ENCODE measurements at regions of chr1 and their contacts with region 1.

Region 1: GRCh38 chr1:11838349-11839272 is 9.0 kb downstream of the NPPA start:
- DNase-seq: peak; percentile 55 to 84 (median 70)
- ATAC-seq: peak; percentile 98
- H3K4me3 ChIP-seq: no peak overlapping the region
- H3K4me3 Mint-ChIP-seq: no peak overlapping the region
- H3K27ac ChIP-seq: no peak overlapping the region
- H3K27ac Mint-ChIP-seq: no peak overlapping the region
- H3K4me1 ChIP-seq: peaks cover 4% of the 10 kb centered on the region
- H3K4me1 Mint-ChIP-seq: peaks cover 5% of the 10 kb centered on the region
- H3K27me3 ChIP-seq: no peaks in the 10 kb centered on the region
- H3K27me3 Mint-ChIP-seq: no peaks in the 10 kb centered on the region
- CTCF ChIP-seq: peak; percentile 99

Region 2: GRCh38 chr1:11576109-11576875 is 262.3 kb before region 1 on chr1:
- CTCF ChIA-PET with region 1: no interaction called
- POLR2A ChIA-PET with region 1: no interaction called
- intact Hi-C with region 1: no loop called
- DNase-seq: no peak
- ATAC-seq: no peak
- H3K4me3 ChIP-seq: no peak overlapping the region
- H3K4me3 Mint-ChIP-seq: no peak overlapping the region
- H3K27ac ChIP-seq: no peak overlapping the region
- H3K27ac Mint-ChIP-seq: no peak overlapping the region
- H3K4me1 ChIP-seq: no peaks in the 10 kb centered on the region
- H3K4me1 Mint-ChIP-seq: no peaks in the 10 kb centered on the region
- H3K27me3 ChIP-seq: peaks cover 0 to 8% of the 10 kb centered on the region in 2 experiments
- H3K27me3 Mint-ChIP-seq: peaks cover 17% of the 10 kb centered on the region
- CTCF ChIP-seq: no peak

Region 3: GRCh38 chr1:11784993-11785769 is 53.4 kb before region 1 on chr1:
- CTCF ChIA-PET with region 1: no interaction called
- POLR2A ChIA-PET with region 1: no interaction called
- intact Hi-C with region 1: no loop called
- DNase-seq: peak in 9 of 14 experiments; percentile 23 to 66 (median 36)
- ATAC-seq: peak; percentile 29
- H3K4me3 ChIP-seq: peak overlapping the region; percentile 36
- H3K4me3 Mint-ChIP-seq: no peak overlapping the region
- H3K27ac ChIP-seq: no peak overlapping the region
- H3K27ac Mint-ChIP-seq: no peak overlapping the region
- H3K4me1 ChIP-seq: peaks cover 13% of the 10 kb centered on the region
- H3K4me1 Mint-ChIP-seq: no peaks in the 10 kb centered on the region
- H3K27me3 ChIP-seq: no peaks in the 10 kb centered on the region
- H3K27me3 Mint-ChIP-seq: no peaks in the 10 kb centered on the region
- CTCF ChIP-seq: peak; percentile 81

Region 4: DNA sequence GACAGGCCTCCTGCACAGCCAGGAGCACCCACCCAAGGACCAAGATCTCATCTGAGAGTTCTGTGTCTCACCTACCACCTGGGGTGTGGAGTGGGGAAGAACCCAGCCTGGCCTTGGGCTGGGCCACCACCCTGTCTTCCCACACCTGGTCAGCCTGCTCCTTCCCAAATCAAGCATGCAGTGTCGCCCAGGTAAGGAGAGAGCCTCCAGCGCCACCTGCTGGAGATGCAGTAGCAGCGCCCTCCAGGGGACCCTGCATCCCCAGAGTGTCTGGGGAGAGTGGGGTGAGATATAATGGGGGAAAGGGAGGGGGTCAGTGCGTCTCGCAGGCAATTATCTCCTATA is 55.3 kb after region 1 on chr1:
- CTCF ChIA-PET with region 1: no interaction called
- POLR2A ChIA-PET with region 1: no interaction called
- intact Hi-C with region 1: loop called (anchors 1 kb)
- DNase-seq: peak; percentile 52 to 81 (median 64)
- ATAC-seq: peak; percentile 91
- H3K4me3 ChIP-seq: no peak overlapping the region
- H3K4me3 Mint-ChIP-seq: no peak overlapping the region
- H3K27ac ChIP-seq: no peak overlapping the region
- H3K27ac Mint-ChIP-seq: no peak overlapping the region
- H3K4me1 ChIP-seq: no peaks in the 10 kb centered on the region
- H3K4me1 Mint-ChIP-seq: no peaks in the 10 kb centered on the region
- H3K27me3 ChIP-seq: peaks cover 19 to 28% of the 10 kb centered on the region in 2 experiments
- H3K27me3 Mint-ChIP-seq: peaks cover 44% of the 10 kb centered on the region
- CTCF ChIP-seq: peak; percentile 83

Region 5: GRCh38 chr1:11967028-11967547 is 128.5 kb after region 1 on chr1:
- CTCF ChIA-PET with region 1: no interaction called
- POLR2A ChIA-PET with region 1: no interaction called
- intact Hi-C with region 1: loop called (anchors 1 to 2 kb)
- DNase-seq: peak in 4 of 14 experiments; percentile 8 to 48 (median 28)
- ATAC-seq: no peak
- H3K4me3 ChIP-seq: no peak overlapping the region
- H3K4me3 Mint-ChIP-seq: no peak overlapping the region
- H3K27ac ChIP-seq: no peak overlapping the region
- H3K27ac Mint-ChIP-seq: no peak overlapping the region
- H3K4me1 ChIP-seq: no peaks in the 10 kb centered on the region
- H3K4me1 Mint-ChIP-seq: no peaks in the 10 kb centered on the region
- H3K27me3 ChIP-seq: no peaks in the 10 kb centered on the region
- H3K27me3 Mint-ChIP-seq: no peaks in the 10 kb centered on the region
- CTCF ChIP-seq: no peak

Region 6: DNA sequence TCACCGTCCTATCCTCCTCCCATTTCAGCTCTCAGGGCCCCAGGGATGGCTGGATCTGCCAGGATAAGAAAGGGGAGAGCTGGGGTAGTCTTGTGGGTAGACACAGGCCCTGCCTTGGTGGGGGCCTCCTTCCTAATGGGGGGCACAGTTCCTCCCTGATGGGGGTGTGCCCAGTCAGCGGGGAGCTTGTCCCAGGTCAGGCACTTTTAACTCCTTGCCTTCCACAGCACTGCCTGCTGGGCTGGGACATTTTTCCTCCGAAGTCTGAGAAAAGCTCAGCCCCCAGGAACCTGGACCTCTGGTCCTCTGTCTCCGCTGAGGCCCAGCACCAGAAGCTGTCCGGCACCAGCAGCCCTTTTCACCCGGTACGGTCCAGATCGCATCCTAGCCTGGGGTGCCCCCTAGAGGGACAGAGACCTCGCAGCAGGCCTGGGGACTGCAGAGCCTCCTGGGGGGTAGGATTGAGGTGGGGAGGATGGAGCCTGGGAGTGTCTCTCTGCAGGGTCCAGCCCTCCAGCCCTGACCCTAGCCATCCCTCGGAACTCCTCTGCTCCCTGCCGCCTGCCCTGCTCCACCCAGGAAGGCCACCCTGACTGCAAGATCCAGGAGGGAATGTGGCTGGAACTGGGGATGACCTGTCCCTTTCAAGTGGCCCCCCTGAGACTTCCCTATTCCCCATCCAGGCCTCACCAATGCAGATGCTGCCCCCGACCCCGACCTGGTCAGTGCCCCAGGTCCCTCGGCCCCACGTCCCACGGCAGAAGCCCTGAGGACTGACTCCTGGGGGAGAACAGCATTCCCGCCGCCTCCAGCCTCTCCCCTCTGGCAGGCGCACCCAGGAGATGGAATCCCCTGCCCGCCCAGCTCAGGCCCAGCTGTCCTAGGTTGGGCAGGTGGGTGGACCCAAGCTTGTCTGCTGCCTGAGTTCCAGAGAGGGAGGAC is 192.7 kb after region 1 on chr1:
- CTCF ChIA-PET with region 1: no interaction called
- POLR2A ChIA-PET with region 1: no interaction called
- intact Hi-C with region 1: loop called in 1 of 2 experiments (anchors 1 kb)
- DNase-seq: peak in 8 of 14 experiments; percentile 7 to 47 (median 32)
- ATAC-seq: no peak
- H3K4me3 ChIP-seq: no peak overlapping the region
- H3K4me3 Mint-ChIP-seq: no peak overlapping the region
- H3K27ac ChIP-seq: no peak overlapping the region
- H3K27ac Mint-ChIP-seq: no peak overlapping the region
- H3K4me1 ChIP-seq: no peaks in the 10 kb centered on the region
- H3K4me1 Mint-ChIP-seq: no peaks in the 10 kb centered on the region
- H3K27me3 ChIP-seq: no peaks in the 10 kb centered on the region
- H3K27me3 Mint-ChIP-seq: no peaks in the 10 kb centered on the region
- CTCF ChIP-seq: peak; percentile 41

Region 7: DNA sequence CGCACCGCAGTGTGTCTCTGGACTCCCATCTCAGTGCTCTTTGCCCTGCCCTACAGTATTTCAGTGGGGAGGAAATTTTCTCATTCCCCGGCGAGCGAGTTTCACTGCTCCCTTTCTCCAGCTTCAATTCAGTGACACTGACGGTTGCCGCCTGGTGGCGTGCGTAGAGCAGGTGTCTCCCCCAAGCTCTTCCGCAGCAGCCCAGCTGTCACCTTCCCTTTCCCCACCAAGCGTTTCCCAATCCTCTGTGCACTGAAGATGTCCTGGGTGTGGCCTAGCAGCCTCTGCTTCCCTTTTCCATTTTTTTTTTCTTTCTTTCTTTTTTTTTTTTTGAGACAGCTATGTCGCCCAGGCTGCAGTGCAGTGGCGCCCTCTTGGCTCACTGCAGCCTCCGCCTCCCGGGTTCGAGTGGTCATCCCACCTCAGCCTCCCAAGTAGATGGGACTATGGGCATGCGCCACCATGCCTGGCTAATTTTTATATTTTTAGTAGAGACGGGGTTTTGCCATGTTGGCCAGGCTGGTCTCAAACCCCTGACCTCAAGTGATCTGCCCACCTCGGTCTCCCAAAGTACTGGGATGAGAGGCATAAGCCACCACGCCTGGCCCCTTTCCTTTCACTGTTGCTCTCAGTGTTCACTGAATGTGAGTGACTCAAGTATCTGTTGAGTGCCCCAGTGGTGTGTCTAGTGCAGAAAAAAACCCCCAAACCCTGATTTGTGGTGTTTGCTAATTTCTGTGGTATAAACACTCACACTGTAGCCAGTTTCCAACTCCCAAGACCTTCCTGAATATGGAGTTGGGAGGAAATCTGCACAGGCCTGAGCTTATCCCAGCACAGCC is 358.3 kb after region 1 on chr1:
- CTCF ChIA-PET with region 1: no interaction called
- POLR2A ChIA-PET with region 1: no interaction called
- intact Hi-C with region 1: no loop called
- DNase-seq: peak in 2 of 14 experiments; percentile 63 to 69
- ATAC-seq: no peak
- H3K4me3 ChIP-seq: no peak overlapping the region
- H3K4me3 Mint-ChIP-seq: no peak overlapping the region
- H3K27ac ChIP-seq: no peak overlapping the region
- H3K27ac Mint-ChIP-seq: no peak overlapping the region
- H3K4me1 ChIP-seq: peaks cover 44% of the 10 kb centered on the region
- H3K4me1 Mint-ChIP-seq: no peaks in the 10 kb centered on the region
- H3K27me3 ChIP-seq: no peaks in the 10 kb centered on the region
- H3K27me3 Mint-ChIP-seq: no peaks in the 10 kb centered on the region
- CTCF ChIP-seq: no peak

Region 8: GRCh38 chr1:12229835-12230548 is 391.4 kb after region 1 on chr1 and contains the start of gene VPS13D:
- CTCF ChIA-PET with region 1: no interaction called
- POLR2A ChIA-PET with region 1: no interaction called
- intact Hi-C with region 1: loop called in 1 of 2 experiments (anchors 5 kb)
- DNase-seq: peak; percentile 74 to 93 (median 82)
- ATAC-seq: peak; percentile 95
- H3K4me3 ChIP-seq: peak within 1 kb of the TSS; percentile 98
- H3K4me3 Mint-ChIP-seq: peak within 1 kb of the TSS; percentile 94
- H3K27ac ChIP-seq: peak within 1 kb of the TSS in 1 of 2 donors; percentile 50
- H3K27ac Mint-ChIP-seq: peak within 1 kb of the TSS; percentile 83
- H3K4me1 ChIP-seq: peaks cover 24% of the 10 kb centered on the region
- H3K4me1 Mint-ChIP-seq: peaks cover 27% of the 10 kb centered on the region
- H3K27me3 ChIP-seq: no peaks in the 10 kb centered on the region
- H3K27me3 Mint-ChIP-seq: no peaks in the 10 kb centered on the region
- CTCF ChIP-seq: peak; percentile 85
- total RNA-seq, gene VPS13D: 63.0 to 67.3 TPM

Measured in CD4-positive, alpha-beta T cell (primary cell).